ENCODE measurements at regions of chr2 and their contacts with region 1.

Region 1: GRCh38 chr2:121974897-121975661 is 219.6 kb downstream of the TSN start:
- DNase-seq: peak; percentile 34 to 60
- ATAC-seq: peak; percentile 39 to 78 (median 72)
- H3K4me3 ChIP-seq: peak overlapping the region; percentile 51
- H3K27ac ChIP-seq: no peak overlapping the region
- H3K4me1 ChIP-seq: no peaks in the 10 kb centered on the region
- H3K27me3 ChIP-seq: peaks cover 0 to 6% (median 0%) of the 10 kb centered on the region in 3 donors
- CTCF ChIP-seq: peak; percentile 58

Region 2: GRCh38 chr2:122451040-122451439 is 476.0 kb after region 1 on chr2:
- intact Hi-C with region 1: loop called in 1 of 2 experiments (anchors 2 kb)
- DNase-seq: no peak
- ATAC-seq: no peak
- H3K4me3 ChIP-seq: no peak overlapping the region
- H3K27ac ChIP-seq: no peak overlapping the region
- H3K4me1 ChIP-seq: no peaks in the 10 kb centered on the region
- H3K27me3 ChIP-seq: no peaks in the 10 kb centered on the region
- CTCF ChIP-seq: peak; percentile 19

Measured in psoas muscle (tissue), 8 donors.